HAP-1 (cell line): ENCODE measurements at regions of chr7 and their contacts with region 1.

Region 1: DNA sequence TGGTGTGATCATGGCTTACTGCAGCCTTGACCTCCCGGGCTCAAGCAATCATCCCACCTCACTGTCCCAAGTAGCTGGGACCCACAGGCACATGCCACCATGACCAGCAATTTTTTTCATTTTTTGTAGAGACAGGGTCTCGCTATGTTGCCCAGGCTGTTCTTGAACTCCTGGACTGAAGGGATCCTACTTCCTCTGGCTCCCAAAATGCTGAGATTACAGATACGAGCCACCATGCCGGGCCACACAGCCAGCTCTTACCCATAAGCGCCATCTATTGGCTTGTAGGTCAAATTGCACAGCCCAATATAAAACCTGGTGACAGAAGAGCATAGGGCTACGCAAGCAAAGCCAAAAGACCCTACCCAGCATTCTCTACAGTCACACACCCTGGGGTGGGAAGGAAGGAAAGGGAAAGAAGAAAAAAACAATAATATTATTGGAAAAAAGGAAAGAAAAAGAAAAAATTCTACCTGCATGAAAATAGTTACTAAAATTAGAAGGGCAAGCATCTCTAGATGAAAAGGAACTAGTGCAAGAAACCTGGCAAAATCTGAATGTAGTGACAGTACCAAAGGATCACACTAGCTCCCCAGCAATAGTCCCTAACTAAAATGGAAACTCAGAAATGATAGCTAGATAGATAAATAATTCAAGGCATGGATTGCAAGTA is 29.4 kb upstream of the AMPH start:
- DNase-seq: peak; percentile 33 to 42
- H3K4me3 ChIP-seq: no peak overlapping the region
- H3K4me1 ChIP-seq: no peaks in the 10 kb centered on the region
- H3K27me3 ChIP-seq: peaks cover 10% of the 10 kb centered on the region; the same call in 1 of the 2 replicates

Region 2: GRCh38 chr7:38169847-38170246 is 490.7 kb before region 1 on chr7:
- in situ Hi-C with region 1: no loop called
- DNase-seq: no peak
- H3K4me3 ChIP-seq: no peak overlapping the region
- H3K4me1 ChIP-seq: no peaks in the 10 kb centered on the region
- H3K27me3 ChIP-seq: peaks cover 16% of the 10 kb centered on the region

Region 3: DNA sequence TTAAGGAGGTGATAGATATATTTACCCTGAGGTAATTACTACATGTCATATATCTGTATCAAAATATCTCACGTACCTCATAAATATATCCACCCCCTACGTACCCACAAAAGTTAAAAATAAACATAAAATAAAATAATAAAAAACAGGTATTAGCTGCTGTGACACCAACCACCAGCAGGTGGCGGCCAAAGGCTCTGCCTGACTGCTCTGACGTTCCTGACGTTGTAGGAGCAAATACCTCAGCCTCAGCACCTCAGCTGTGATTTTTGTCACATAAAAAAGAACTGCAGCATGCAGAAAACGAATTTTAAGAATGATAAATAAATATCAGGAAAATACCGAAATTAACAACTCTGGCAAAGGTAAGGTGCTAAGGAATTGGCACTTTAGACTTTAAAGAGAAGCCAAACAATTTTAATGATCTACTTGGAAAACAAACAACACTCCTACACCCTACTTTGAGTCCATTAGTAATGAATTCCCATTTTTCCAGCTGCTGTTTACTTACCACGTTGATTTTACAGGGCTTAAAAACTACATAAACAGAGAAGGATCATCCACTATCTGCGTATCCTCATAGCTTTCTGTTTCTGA is 261.7 kb before region 1 on chr7:
- in situ Hi-C with region 1: loop called (anchors 10 kb)
- DNase-seq: peak; percentile 28 to 64
- H3K4me3 ChIP-seq: no peak overlapping the region
- H3K4me1 ChIP-seq: no peaks in the 10 kb centered on the region
- H3K27me3 ChIP-seq: peaks cover 11% of the 10 kb centered on the region

Region 4: GRCh38 chr7:38846265-38846664 is 185.7 kb after region 1 on chr7:
- in situ Hi-C with region 1: no loop called
- DNase-seq: peak; percentile 21 to 44
- H3K4me3 ChIP-seq: no peak overlapping the region
- H3K4me1 ChIP-seq: peaks cover 16% of the 10 kb centered on the region
- H3K27me3 ChIP-seq: no peaks in the 10 kb centered on the region

Region 5: GRCh38 chr7:38950309-38950708 is 289.7 kb after region 1 on chr7:
- in situ Hi-C with region 1: no loop called
- DNase-seq: peak in 1 of 2 experiments; percentile 27
- H3K4me3 ChIP-seq: no peak overlapping the region
- H3K4me1 ChIP-seq: peaks cover 16% of the 10 kb centered on the region
- H3K27me3 ChIP-seq: no peaks in the 10 kb centered on the region

Region 6: DNA sequence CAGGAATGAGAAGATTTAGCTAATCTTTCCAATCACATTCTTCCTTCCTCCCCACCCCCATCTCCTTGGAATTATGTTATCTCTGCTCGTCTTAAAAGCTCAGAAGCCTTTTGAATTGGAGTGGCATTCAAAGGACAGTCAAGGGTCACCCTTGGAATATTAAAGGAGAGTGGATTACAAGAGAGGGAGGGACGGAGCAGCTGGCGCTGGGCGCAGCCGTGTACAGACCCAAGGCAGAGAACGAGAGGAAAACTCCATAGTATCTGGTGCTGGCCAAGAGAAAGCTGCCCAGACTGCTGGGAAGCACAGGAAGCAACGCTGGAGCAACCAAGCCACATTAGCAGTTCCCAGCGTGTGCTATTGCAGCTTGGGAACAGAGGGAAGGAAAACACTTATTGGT is 412.9 kb after region 1 on chr7:
- in situ Hi-C with region 1: no loop called
- DNase-seq: peak; percentile 77 to 86
- H3K4me3 ChIP-seq: no peak overlapping the region
- H3K4me1 ChIP-seq: peaks cover 19% of the 10 kb centered on the region
- H3K27me3 ChIP-seq: no peaks in the 10 kb centered on the region